Heart right ventricle (tissue), 16 donors: ENCODE measurements at regions of chr13 and their contacts with region 1.

Region 1: DNA sequence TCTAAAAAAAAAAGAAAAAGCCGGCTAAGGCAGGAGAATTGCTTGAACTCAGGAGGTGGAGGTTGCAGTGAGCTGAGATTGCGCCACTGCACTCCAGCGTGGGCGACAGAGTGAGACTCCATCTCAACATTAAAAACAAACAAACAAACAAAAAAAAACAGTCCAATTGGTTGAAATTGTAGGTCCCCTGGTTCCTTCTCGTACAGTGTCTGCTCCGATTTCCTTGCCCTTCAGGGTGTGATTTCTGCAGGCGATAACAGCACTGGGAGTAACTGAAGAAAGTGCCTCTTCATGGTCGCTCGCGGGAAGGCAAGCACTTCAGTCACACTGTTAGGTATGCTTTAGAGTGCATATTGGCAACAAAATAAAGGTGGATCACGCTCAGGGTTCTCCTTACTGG is 39.7 kb downstream of the TPT1 start:
- DNase-seq: no peak
- ATAC-seq: no peak
- H3K4me3 ChIP-seq: no peak overlapping the region
- H3K27ac ChIP-seq: no peak overlapping the region
- H3K4me1 ChIP-seq: peaks cover 0 to 17% (median 0%) of the 10 kb centered on the region in 9 donors
- H3K27me3 ChIP-seq: peaks cover 0 to 5% (median 0%) of the 10 kb centered on the region in 7 donors
- CTCF ChIP-seq: no peak

Region 2: DNA sequence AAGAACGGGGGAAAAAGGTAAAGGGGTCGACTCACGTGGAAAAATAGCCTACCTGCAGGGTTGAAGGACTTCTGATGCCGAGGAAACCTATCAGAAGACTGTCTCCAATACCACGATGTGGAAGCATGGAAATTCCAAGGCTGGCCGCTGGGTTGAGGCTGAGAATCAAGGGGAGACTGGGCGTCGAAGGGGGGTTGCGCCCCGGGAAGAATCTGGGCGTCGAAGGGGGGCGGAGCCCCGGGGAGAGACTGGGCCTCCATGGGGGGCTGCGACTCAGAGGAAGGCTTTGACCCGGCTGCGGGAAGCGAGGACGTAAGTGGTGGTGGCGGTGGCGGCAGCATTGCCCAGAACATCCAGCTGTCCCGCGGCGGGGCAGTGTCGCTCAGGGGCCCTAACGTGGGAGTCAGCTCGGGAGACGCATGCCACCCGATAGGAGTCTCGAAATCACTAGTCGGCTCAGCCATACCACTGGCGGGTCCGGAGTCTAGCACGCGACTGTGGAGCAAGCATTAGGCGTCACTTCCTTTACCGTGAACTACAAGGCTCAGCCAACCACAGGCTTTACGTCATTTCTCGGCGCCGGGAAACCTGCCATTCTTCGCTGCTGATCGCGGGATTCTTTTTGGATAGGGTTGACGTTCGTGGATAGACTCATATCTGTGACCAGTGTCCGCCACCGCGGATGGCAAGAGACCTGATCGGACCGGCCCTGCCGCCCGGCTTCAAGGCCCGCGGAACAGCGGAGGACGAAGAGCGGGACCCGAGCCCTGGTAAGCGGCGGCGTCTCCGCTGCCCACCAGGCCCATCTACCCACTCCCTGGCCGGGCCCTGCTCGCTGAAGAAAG is 312.0 kb before region 1 on chr13 and contains the starts of genes GPALPP1 and NUFIP1:
- intact Hi-C with region 1: loop called in 1 of 10 experiments (anchors 10 kb)
- DNase-seq: peak; percentile 89 to 96
- ATAC-seq: peak; percentile 96 to 99 (median 98)
- H3K4me3 ChIP-seq: peak within 1 kb of the TSS; percentile 66 to 99 (median 92)
- H3K27ac ChIP-seq: peak within 1 kb of the TSS; percentile 51 to 94 (median 84)
- H3K4me1 ChIP-seq: peaks cover 0 to 48% (median 27%) of the 10 kb centered on the region in 9 donors
- H3K27me3 ChIP-seq: no peaks in the 10 kb centered on the region
- CTCF ChIP-seq: peak in 1 of 9 donors; percentile 7
- total RNA-seq, gene GPALPP1: 10.9 to 16.5 (median 13.0) TPM
- total RNA-seq, gene NUFIP1: 2.3 to 5.0 (median 3.2) TPM

Region 3: DNA sequence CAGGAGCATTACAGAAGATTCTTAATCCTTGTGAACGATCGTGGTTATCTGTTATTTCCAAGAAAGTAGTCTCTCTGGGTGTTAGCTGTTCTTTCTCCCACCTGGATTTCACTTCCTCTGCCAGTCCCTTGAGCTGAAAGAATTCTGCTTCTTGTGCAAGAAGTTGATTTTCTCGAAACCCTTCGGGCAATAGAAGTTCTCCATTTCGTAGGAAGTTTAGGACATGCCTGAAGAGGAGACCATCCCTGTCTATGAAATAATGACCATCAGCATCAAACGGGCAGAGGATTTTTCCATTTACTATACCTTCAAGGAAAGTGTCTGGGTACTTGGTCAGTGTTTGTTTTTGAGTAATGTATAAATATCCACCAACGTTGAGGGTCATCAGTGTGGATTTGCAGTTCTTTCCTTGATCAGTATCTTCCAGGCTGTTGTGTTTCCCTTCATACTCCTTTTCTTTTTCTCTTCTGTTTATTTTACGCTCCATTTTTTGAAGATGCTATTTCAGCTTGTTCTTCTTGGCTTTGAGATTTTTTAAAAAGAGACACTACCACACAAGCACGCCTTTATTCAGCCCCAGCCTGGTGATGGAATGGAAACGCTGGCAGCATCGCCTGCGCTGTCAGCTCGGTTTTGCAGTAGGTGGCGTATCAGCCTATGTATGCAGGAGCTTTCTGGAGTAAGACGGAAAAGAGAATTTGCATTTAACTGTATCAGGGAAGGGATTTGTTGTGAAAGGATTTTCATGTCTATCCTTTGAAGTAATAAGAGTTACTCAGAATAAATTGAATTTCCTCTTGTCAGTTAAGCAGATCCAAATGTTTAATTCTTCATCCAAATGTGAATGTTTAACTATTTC is 106.9 kb before region 1 on chr13:
- intact Hi-C with region 1: loop called in 1 of 10 experiments (anchors 10 kb)
- DNase-seq: peak; percentile 23 to 39
- ATAC-seq: peak in 7 of 8 donors; percentile 59 to 83 (median 78)
- H3K4me3 ChIP-seq: peak overlapping the region in 2 of 10 donors; percentile 3 to 5
- H3K27ac ChIP-seq: no peak overlapping the region
- H3K4me1 ChIP-seq: peaks cover 0 to 44% (median 24%) of the 10 kb centered on the region in 9 donors
- H3K27me3 ChIP-seq: no peaks in the 10 kb centered on the region
- CTCF ChIP-seq: peak in 7 of 9 donors; percentile 27 to 59 (median 38)

Region 4: GRCh38 chr13:45374917-45375316 is 73.7 kb after region 1 on chr13:
- intact Hi-C with region 1: no loop called
- DNase-seq: no peak
- ATAC-seq: no peak
- H3K4me3 ChIP-seq: no peak overlapping the region
- H3K27ac ChIP-seq: no peak overlapping the region
- H3K4me1 ChIP-seq: peaks cover 5 to 26% (median 12%) of the 10 kb centered on the region in 9 donors
- H3K27me3 ChIP-seq: no peaks in the 10 kb centered on the region
- CTCF ChIP-seq: no peak